ENCODE measurements at regions of chr1 and their contacts with region 1.

Region 1: GRCh38 chr1:28926629-28927265 is 12.4 kb downstream of the EPB41 start:
- DNase-seq: peak in 6 of 9 experiments; percentile 21 to 91 (median 42)
- ATAC-seq: peak; percentile 78
- H3K4me3 ChIP-seq: peak overlapping the region; percentile 22 to 29
- H3K4me3 Mint-ChIP-seq: peak overlapping the region; percentile 53
- H3K27ac ChIP-seq: peak overlapping the region; percentile 36 to 82
- H3K27ac Mint-ChIP-seq: peak overlapping the region; percentile 87
- H3K4me1 ChIP-seq: peaks cover 71% of the 10 kb centered on the region
- H3K4me1 Mint-ChIP-seq: peaks cover 74% of the 10 kb centered on the region
- H3K27me3 ChIP-seq: no peaks in the 10 kb centered on the region
- H3K27me3 Mint-ChIP-seq: no peaks in the 10 kb centered on the region
- CTCF ChIP-seq: no peak

Region 2: DNA sequence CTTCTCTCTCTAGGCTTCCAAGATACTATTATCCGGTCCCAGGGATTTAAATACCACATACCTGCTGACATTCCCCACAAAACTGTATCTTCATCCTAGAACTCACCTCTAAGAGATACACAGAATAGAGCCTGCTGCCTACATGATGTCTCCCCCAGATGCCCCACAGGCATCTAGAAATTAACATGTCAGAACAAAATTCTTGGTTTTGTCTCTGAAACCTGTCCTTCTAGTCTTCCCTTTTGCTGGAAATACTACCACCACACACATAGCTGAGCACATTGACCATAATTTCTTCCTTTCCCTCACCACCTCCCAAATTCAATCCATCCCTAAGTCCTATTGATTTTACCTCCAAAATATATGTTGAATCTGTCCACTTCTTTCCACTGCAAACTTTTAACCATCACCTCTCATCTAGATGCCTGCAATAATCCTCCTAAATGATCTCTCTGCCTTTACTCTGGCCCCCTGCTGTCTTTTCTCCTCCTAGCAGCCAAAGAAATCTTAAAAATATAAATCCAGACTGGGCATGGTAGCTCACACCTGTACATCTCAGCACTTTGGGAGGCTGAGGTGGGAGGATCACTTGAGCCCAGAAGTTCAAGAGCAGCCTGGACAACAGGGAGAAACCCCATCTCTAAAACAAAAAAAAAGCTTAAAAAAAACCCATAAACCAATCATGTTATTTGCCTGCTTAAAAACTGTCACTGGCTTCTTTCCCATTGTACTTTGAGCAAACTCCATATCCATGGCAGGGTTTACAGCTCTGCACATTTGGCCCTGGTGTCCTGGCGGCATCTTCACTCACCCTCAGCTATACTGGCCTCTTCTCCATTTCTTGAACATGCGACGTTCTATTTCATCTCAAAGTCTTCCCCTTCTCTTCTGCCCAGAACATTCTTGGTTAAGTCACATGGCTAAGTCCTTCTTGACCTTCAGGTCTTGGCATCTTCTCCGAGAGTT is 1207.2 kb before region 1 on chr1:
- CTCF ChIA-PET with region 1: no interaction called
- POLR2A ChIA-PET with region 1: no interaction called
- intact Hi-C with region 1: no loop called
- DNase-seq: peak in 2 of 9 experiments; percentile 26 to 33
- ATAC-seq: peak; percentile 42
- H3K4me3 ChIP-seq: no peak overlapping the region
- H3K4me3 Mint-ChIP-seq: no peak overlapping the region
- H3K27ac ChIP-seq: no peak overlapping the region
- H3K27ac Mint-ChIP-seq: no peak overlapping the region
- H3K4me1 ChIP-seq: no peaks in the 10 kb centered on the region
- H3K4me1 Mint-ChIP-seq: peaks cover 1% of the 10 kb centered on the region
- H3K27me3 ChIP-seq: peaks cover 0 to 9% of the 10 kb centered on the region in 2 experiments
- H3K27me3 Mint-ChIP-seq: peaks cover 17% of the 10 kb centered on the region
- CTCF ChIP-seq: peak; percentile 45

Region 3: GRCh38 chr1:28648474-28649198 is 278.1 kb before region 1 on chr1 and contains the start of gene RNU11:
- CTCF ChIA-PET with region 1: no interaction called
- POLR2A ChIA-PET with region 1: interaction called, 3 read pairs
- intact Hi-C with region 1: loop called (anchors 1 to 5 kb)
- DNase-seq: peak; percentile 76 to 97 (median 87)
- ATAC-seq: peak; percentile 65
- H3K4me3 ChIP-seq: peak within 1 kb of the TSS; percentile 41 to 65
- H3K4me3 Mint-ChIP-seq: peak within 1 kb of the TSS; percentile 80
- H3K27ac ChIP-seq: peak within 1 kb of the TSS; percentile 96 to 98
- H3K27ac Mint-ChIP-seq: peak within 1 kb of the TSS; percentile 99
- H3K4me1 ChIP-seq: peaks cover 30% of the 10 kb centered on the region
- H3K4me1 Mint-ChIP-seq: peaks cover 32% of the 10 kb centered on the region
- H3K27me3 ChIP-seq: no peaks in the 10 kb centered on the region
- H3K27me3 Mint-ChIP-seq: no peaks in the 10 kb centered on the region
- CTCF ChIP-seq: no peak
- total RNA-seq, gene RNU11: not detected

Region 4: GRCh38 chr1:28914228-28915030 is 12.3 kb before region 1 on chr1 and contains the start of gene EPB41:
- CTCF ChIA-PET with region 1: interaction called, 4 read pairs
- POLR2A ChIA-PET with region 1: interaction called, 22 read pairs
- intact Hi-C with region 1: loop called (anchors 1 kb)
- DNase-seq: peak; percentile 76 to 96 (median 94)
- ATAC-seq: peak; percentile 77
- H3K4me3 ChIP-seq: peak within 1 kb of the TSS; percentile 80 to 86
- H3K4me3 Mint-ChIP-seq: peak within 1 kb of the TSS; percentile 99
- H3K27ac ChIP-seq: peak within 1 kb of the TSS; percentile 62 to 77
- H3K27ac Mint-ChIP-seq: peak within 1 kb of the TSS; percentile 98
- H3K4me1 ChIP-seq: peaks cover 40% of the 10 kb centered on the region
- H3K4me1 Mint-ChIP-seq: peaks cover 49% of the 10 kb centered on the region
- H3K27me3 ChIP-seq: no peaks in the 10 kb centered on the region
- H3K27me3 Mint-ChIP-seq: no peaks in the 10 kb centered on the region
- CTCF ChIP-seq: no peak
- total RNA-seq, gene EPB41: 109 to 117 TPM

Region 5: GRCh38 chr1:28956038-28956464 is 29.3 kb after region 1 on chr1:
- CTCF ChIA-PET with region 1: interaction called, 4 read pairs
- POLR2A ChIA-PET with region 1: no interaction called
- intact Hi-C with region 1: loop called in 1 of 2 experiments (anchors 5 kb)
- DNase-seq: no peak
- ATAC-seq: no peak
- H3K4me3 ChIP-seq: no peak overlapping the region
- H3K4me3 Mint-ChIP-seq: no peak overlapping the region
- H3K27ac ChIP-seq: no peak overlapping the region
- H3K27ac Mint-ChIP-seq: peak overlapping the region; percentile 4
- H3K4me1 ChIP-seq: peaks cover 23% of the 10 kb centered on the region
- H3K4me1 Mint-ChIP-seq: peaks cover 68% of the 10 kb centered on the region
- H3K27me3 ChIP-seq: no peaks in the 10 kb centered on the region
- H3K27me3 Mint-ChIP-seq: no peaks in the 10 kb centered on the region
- CTCF ChIP-seq: no peak

Region 6: GRCh38 chr1:28983509-28984310 is 57.0 kb after region 1 on chr1:
- CTCF ChIA-PET with region 1: interaction called, 3 read pairs
- POLR2A ChIA-PET with region 1: interaction called, 3 read pairs
- intact Hi-C with region 1: loop called in 1 of 2 experiments (anchors 5 kb)
- DNase-seq: peak in 5 of 9 experiments; percentile 11 to 42 (median 33)
- ATAC-seq: no peak
- H3K4me3 ChIP-seq: no peak overlapping the region
- H3K4me3 Mint-ChIP-seq: peak overlapping the region; percentile 8
- H3K27ac ChIP-seq: no peak overlapping the region
- H3K27ac Mint-ChIP-seq: peak overlapping the region; percentile 46
- H3K4me1 ChIP-seq: peaks cover 18% of the 10 kb centered on the region
- H3K4me1 Mint-ChIP-seq: peaks cover 79% of the 10 kb centered on the region
- H3K27me3 ChIP-seq: no peaks in the 10 kb centered on the region
- H3K27me3 Mint-ChIP-seq: no peaks in the 10 kb centered on the region
- CTCF ChIP-seq: peak; percentile 13

Measured in CD8-positive, alpha-beta T cell (primary cell).